ENCODE measurements at regions of chr18 and their contacts with region 1.

Region 1: GRCh38 chr18:8301427-8302172 is 307.6 kb upstream of the RAB12 start:
- DNase-seq: no peak
- ATAC-seq: peak in 2 of 4 donors; percentile 23 to 28
- H3K4me3 ChIP-seq: no peak overlapping the region
- H3K27ac ChIP-seq: no peak overlapping the region
- H3K4me1 ChIP-seq: peaks cover 0 to 6% (median 0%) of the 10 kb centered on the region in 12 donors
- H3K27me3 ChIP-seq: no peaks in the 10 kb centered on the region
- CTCF ChIP-seq: no peak
- POLR2A ChIP-seq: no peak

Region 2: GRCh38 chr18:8229775-8230174 is 71.8 kb before region 1 on chr18:
- intact Hi-C with region 1: no loop called
- DNase-seq: no peak
- ATAC-seq: no peak
- H3K4me3 ChIP-seq: no peak overlapping the region
- H3K27ac ChIP-seq: no peak overlapping the region
- H3K4me1 ChIP-seq: no peaks in the 10 kb centered on the region
- H3K27me3 ChIP-seq: no peaks in the 10 kb centered on the region
- CTCF ChIP-seq: no peak
- POLR2A ChIP-seq: no peak

Region 3: GRCh38 chr18:8367217-8367988 is 65.8 kb after region 1 on chr18:
- intact Hi-C with region 1: loop called in 1 of 10 experiments (anchors 10 kb)
- DNase-seq: peak in 4 of 5 donors; percentile 17 to 69 (median 27)
- ATAC-seq: peak in 3 of 4 donors; percentile 37 to 51 (median 41)
- H3K4me3 ChIP-seq: peak overlapping the region in 11 of 12 donors; percentile 21 to 54 (median 40)
- H3K27ac ChIP-seq: no peak overlapping the region
- H3K4me1 ChIP-seq: peaks cover 0 to 37% (median 13%) of the 10 kb centered on the region in 12 donors
- H3K27me3 ChIP-seq: no peaks in the 10 kb centered on the region
- CTCF ChIP-seq: peak; percentile 8 to 65 (median 47)
- POLR2A ChIP-seq: no peak

Measured in heart left ventricle (tissue), 16 donors.